ENCODE measurements at regions of chr7 and their contacts with region 1.

Region 1: DNA sequence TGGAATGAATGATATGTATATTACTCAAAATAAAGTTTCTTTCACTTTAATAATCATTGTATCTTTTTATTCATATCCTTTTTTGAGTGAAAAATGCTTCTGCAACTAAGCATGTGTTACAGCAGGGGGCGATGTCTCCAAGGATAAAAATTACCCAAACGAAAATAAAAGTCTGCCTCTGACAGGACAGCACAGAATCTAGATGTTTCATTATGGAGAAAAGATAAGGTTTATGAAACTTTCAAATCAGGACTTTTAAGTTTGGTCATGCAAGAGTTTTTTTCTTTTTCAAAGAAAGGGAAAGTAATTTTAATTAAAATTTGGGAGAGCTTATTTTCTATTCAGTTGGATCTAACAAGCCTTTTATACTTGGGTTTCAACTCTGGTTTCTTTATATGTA is 48.4 kb downstream of the TES start:
- DNase-seq: peak; percentile 71
- H3K4me3 Mint-ChIP-seq: no peak overlapping the region
- H3K27ac Mint-ChIP-seq: peak overlapping the region; percentile 96
- H3K4me1 Mint-ChIP-seq: peaks cover 39% of the 10 kb centered on the region
- H3K27me3 Mint-ChIP-seq: no peaks in the 10 kb centered on the region
- CTCF ChIP-seq: peak; percentile 76

Region 2: DNA sequence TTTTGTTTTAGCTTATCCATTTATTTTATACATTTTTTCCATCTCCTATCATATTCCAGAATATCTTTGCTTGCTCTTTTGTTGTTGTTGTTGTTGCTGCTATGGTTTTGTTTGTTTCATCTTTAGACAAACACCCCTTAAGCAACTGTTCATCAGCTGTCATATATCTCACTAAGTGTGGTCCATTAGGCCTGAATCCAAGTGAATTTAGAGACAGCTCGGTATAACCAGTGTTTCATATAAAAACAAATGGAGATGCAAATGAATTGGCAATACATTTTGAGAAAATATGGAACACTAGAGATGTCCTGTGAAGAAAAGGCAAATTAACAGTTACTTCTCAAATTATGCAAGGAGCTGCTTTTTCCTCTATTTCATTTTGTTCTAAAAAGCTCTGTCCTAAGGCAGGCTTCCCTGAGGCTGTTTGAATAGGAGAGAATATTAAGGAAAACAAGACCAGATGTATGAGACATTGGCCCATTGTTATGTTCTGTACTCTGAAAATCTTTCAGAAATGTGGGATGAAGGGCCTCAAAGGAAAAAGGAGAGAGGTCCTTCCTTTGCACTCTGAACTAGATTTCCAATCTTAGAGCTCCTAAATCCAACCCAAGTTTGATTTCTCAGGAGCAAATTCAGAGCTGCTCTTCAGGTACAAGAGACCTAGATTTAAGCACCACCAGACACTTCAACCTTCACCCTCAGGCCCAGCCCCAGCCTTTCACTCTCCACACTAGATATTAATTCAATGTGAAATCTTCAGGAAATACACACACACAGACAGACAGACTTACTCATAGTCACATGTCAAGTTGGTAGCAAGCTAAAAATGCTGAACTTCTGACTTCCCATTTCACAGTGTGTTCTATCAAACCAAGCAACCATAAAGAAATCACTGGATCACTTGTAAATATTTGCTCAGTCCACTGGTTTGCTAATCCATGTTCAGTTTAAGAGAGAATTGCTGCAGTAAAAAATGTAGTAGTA is 233.6 kb before region 1 on chr7:
- CTCF ChIA-PET with region 1: no interaction called
- POLR2A ChIA-PET with region 1: no interaction called
- intact Hi-C with region 1: no loop called
- DNase-seq: no peak
- H3K4me3 Mint-ChIP-seq: no peak overlapping the region
- H3K27ac Mint-ChIP-seq: no peak overlapping the region
- H3K4me1 Mint-ChIP-seq: no peaks in the 10 kb centered on the region
- H3K27me3 Mint-ChIP-seq: peaks cover 77% of the 10 kb centered on the region
- CTCF ChIP-seq: no peak

Region 3: DNA sequence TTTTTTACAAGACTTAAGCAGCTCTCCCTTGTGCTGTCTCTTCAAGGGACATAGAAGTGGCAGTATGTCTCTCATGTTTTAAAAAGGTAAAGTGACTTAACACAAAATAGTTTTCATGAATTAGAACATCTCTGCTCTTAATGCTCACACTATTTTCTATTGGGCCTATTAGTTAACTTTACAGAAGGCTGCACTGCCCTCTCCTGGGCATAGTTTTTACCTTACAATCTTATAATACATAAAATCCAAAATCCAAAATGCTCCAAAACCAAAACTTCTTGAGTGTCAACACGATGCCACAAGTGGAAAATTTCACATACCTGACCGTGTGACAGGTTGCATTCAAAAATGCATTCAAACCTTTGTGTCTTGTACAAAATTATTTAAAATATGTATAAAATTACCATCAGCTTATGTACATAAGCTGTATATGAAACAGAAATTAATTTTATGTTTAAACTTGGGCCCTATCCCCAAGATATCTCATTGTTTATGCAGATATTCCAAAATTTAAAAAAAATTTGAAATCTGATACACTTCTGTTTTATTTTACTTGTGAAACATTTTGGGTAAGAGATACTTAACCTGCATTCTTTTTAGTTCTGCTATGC is 22.6 kb before region 1 on chr7:
- CTCF ChIA-PET with region 1: interaction called, 32 read pairs
- POLR2A ChIA-PET with region 1: interaction called, 4 read pairs
- intact Hi-C with region 1: no loop called
- DNase-seq: peak; percentile 68
- H3K4me3 Mint-ChIP-seq: no peak overlapping the region
- H3K27ac Mint-ChIP-seq: no peak overlapping the region
- H3K4me1 Mint-ChIP-seq: peaks cover 9% of the 10 kb centered on the region
- H3K27me3 Mint-ChIP-seq: no peaks in the 10 kb centered on the region
- CTCF ChIP-seq: peak; percentile 32

Region 4: GRCh38 chr7:116354546-116355408 is 96.0 kb after region 1 on chr7:
- CTCF ChIA-PET with region 1: interaction called, 4 read pairs
- POLR2A ChIA-PET with region 1: interaction called, 11 read pairs
- intact Hi-C with region 1: loop called (anchors 1 kb)
- DNase-seq: peak; percentile 91
- H3K4me3 Mint-ChIP-seq: peak overlapping the region; percentile 69
- H3K27ac Mint-ChIP-seq: peak overlapping the region; percentile 98
- H3K4me1 Mint-ChIP-seq: peaks cover 42% of the 10 kb centered on the region
- H3K27me3 Mint-ChIP-seq: no peaks in the 10 kb centered on the region
- CTCF ChIP-seq: no peak

Region 5: DNA sequence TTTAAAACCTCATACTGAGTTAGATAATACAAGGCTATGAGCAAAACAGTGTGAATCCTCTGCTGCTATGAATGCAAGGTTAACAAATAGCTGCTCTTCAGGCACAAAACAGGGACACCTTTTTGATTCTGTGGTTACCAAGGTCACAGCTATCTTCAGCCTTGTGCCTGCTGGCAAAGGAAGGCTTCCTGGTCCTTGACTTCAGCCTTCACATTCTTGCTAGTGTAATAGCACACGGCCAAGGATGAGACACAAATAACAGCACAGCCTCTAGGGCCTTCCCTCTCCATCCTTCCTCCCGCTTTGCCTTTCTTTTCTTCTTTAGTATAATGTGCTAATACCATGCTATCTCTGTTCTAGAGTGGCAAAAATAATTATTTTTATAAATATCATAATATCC is 110.2 kb after region 1 on chr7:
- CTCF ChIA-PET with region 1: no interaction called
- POLR2A ChIA-PET with region 1: no interaction called
- intact Hi-C with region 1: no loop called
- DNase-seq: no peak
- H3K4me3 Mint-ChIP-seq: no peak overlapping the region
- H3K27ac Mint-ChIP-seq: no peak overlapping the region
- H3K4me1 Mint-ChIP-seq: peaks cover 3% of the 10 kb centered on the region
- H3K27me3 Mint-ChIP-seq: no peaks in the 10 kb centered on the region
- CTCF ChIP-seq: no peak

Region 6: GRCh38 chr7:116499168-116500077 is 240.7 kb after region 1 on chr7 and contains the start of gene CAV2:
- CTCF ChIA-PET with region 1: interaction called, 27 read pairs
- POLR2A ChIA-PET with region 1: interaction called, 41 read pairs
- intact Hi-C with region 1: loop called (anchors 1 kb)
- DNase-seq: peak; percentile 86
- H3K4me3 Mint-ChIP-seq: peak within 1 kb of the TSS; percentile 87
- H3K27ac Mint-ChIP-seq: peak within 1 kb of the TSS; percentile 90
- H3K4me1 Mint-ChIP-seq: peaks cover 32% of the 10 kb centered on the region
- H3K27me3 Mint-ChIP-seq: no peaks in the 10 kb centered on the region
- CTCF ChIP-seq: no peak
- total RNA-seq, gene CAV2: 155 and 171 TPM in 2 replicates

Region 7: GRCh38 chr7:116571037-116571436 is 312.3 kb after region 1 on chr7:
- CTCF ChIA-PET with region 1: interaction called, 11 read pairs
- POLR2A ChIA-PET with region 1: interaction called, 12 read pairs
- intact Hi-C with region 1: no loop called
- DNase-seq: peak; percentile 58
- H3K4me3 Mint-ChIP-seq: peak overlapping the region; percentile 26
- H3K27ac Mint-ChIP-seq: peak overlapping the region; percentile 47
- H3K4me1 Mint-ChIP-seq: peaks cover 42% of the 10 kb centered on the region
- H3K27me3 Mint-ChIP-seq: no peaks in the 10 kb centered on the region
- CTCF ChIP-seq: no peak

Region 8: GRCh38 chr7:116588641-116589594 is 330.2 kb after region 1 on chr7:
- CTCF ChIA-PET with region 1: interaction called, 96 read pairs
- POLR2A ChIA-PET with region 1: interaction called, 32 read pairs
- intact Hi-C with region 1: loop called (anchors 1 kb)
- DNase-seq: peak; percentile 64
- H3K4me3 Mint-ChIP-seq: no peak overlapping the region
- H3K27ac Mint-ChIP-seq: peak overlapping the region; percentile 85
- H3K4me1 Mint-ChIP-seq: peaks cover 16% of the 10 kb centered on the region
- H3K27me3 Mint-ChIP-seq: peaks cover 10% of the 10 kb centered on the region
- CTCF ChIP-seq: peak; percentile 57